Activated B cell treated with CpG ODN at 0.5 μM for 24 hours (primary cell): ENCODE measurements at regions of chr10 and their contacts with region 1.

Region 1: DNA sequence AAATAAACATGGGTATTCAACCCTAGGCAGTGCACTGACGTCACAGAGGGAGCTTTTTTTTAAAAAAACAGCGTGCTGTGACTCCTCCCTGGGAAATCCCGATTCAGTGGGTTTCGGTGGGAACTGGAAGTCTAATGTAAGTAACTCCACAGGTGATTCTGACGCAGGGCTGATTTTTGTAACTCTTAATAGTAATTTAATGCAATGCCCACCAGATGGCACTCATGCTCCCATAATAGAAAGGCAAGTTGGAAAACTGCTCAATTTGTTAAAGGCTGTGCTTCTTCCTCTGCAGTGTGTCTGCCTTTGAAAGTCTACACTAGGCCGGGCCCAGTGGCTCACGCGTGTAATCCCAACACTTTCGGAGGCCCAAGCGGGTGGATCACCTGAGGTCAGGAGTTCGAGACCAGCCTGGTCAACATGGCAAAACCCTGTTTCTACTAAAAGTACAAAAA is 10.9 kb upstream of the RSU1 start:
- DNase-seq: peak; percentile 16
- ATAC-seq: peak; percentile 86
- H3K4me3 Mint-ChIP-seq: no peak overlapping the region
- H3K27ac Mint-ChIP-seq: no peak overlapping the region
- H3K4me1 Mint-ChIP-seq: peaks cover 6% of the 10 kb centered on the region
- H3K27me3 Mint-ChIP-seq: no peaks in the 10 kb centered on the region
- CTCF ChIP-seq: no peak

Region 2: DNA sequence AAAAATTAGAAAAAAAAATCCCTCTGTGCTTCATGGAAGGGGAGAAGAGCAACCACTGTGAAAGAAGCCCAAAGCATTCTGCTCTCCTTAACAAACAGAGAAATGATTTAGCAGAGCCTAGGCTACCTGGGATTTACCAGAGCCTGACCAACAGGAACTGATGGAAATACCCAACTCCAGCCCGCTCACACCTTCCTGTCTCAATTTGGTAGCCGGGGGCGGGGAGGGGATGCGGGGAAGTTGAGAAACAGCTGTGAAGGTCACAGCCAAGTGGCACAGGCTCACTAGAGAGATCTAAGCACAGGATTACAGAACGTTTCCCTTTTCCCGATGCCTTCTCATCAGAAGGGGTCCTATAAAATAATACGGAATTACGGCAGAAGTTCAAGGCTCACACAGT is 28.5 kb before region 1 on chr10:
- CTCF ChIA-PET with region 1: no interaction called
- POLR2A ChIA-PET with region 1: no interaction called
- intact Hi-C with region 1: no loop called
- DNase-seq: no peak
- ATAC-seq: peak; percentile 40
- H3K4me3 Mint-ChIP-seq: no peak overlapping the region
- H3K27ac Mint-ChIP-seq: no peak overlapping the region
- H3K4me1 Mint-ChIP-seq: peaks cover 16% of the 10 kb centered on the region
- H3K27me3 Mint-ChIP-seq: no peaks in the 10 kb centered on the region
- CTCF ChIP-seq: no peak

Region 3: DNA sequence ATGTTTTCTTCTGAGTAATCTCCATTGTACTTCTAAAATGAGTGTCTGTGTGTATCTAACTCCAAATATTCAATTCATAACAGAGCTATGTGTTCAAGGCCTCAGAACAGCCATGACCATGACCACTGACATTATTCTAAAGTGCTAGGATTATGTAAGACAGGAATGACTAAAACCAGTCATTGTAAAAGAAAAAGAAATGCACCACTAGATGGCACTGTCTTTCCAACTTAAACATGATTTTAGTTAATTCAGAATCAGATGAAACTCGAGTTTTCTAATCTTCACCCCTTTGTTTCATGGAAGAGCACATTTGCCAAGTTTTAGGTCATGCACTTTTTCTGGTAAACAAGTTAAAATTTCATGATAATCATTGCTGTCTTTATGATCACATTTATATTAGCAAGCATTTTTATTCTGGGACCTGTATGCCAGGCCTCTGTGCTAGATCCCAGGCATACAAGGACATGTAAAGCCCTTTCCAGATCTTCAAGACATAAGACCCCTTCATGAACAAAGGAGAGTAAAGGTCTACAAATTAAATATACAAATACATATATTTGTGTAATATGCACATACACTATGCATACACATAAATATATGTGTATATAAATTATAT is 15.2 kb after region 1 on chr10:
- CTCF ChIA-PET with region 1: interaction called, 5 read pairs
- POLR2A ChIA-PET with region 1: no interaction called
- intact Hi-C with region 1: loop called (anchors 1 kb)
- DNase-seq: no peak
- ATAC-seq: peak; percentile 37
- H3K4me3 Mint-ChIP-seq: no peak overlapping the region
- H3K27ac Mint-ChIP-seq: no peak overlapping the region
- H3K4me1 Mint-ChIP-seq: no peaks in the 10 kb centered on the region
- H3K27me3 Mint-ChIP-seq: no peaks in the 10 kb centered on the region
- CTCF ChIP-seq: peak; percentile 35

Region 4: GRCh38 chr10:17257466-17258321 is 429.6 kb after region 1 on chr10:
- CTCF ChIA-PET with region 1: interaction called, 9 read pairs
- POLR2A ChIA-PET with region 1: no interaction called
- intact Hi-C with region 1: loop called (anchors 1 kb)
- DNase-seq: no peak
- ATAC-seq: peak; percentile 74
- H3K4me3 Mint-ChIP-seq: no peak overlapping the region
- H3K27ac Mint-ChIP-seq: no peak overlapping the region
- H3K4me1 Mint-ChIP-seq: peaks cover 6% of the 10 kb centered on the region
- H3K27me3 Mint-ChIP-seq: peaks cover 5% of the 10 kb centered on the region
- CTCF ChIP-seq: peak; percentile 88

Region 5: DNA sequence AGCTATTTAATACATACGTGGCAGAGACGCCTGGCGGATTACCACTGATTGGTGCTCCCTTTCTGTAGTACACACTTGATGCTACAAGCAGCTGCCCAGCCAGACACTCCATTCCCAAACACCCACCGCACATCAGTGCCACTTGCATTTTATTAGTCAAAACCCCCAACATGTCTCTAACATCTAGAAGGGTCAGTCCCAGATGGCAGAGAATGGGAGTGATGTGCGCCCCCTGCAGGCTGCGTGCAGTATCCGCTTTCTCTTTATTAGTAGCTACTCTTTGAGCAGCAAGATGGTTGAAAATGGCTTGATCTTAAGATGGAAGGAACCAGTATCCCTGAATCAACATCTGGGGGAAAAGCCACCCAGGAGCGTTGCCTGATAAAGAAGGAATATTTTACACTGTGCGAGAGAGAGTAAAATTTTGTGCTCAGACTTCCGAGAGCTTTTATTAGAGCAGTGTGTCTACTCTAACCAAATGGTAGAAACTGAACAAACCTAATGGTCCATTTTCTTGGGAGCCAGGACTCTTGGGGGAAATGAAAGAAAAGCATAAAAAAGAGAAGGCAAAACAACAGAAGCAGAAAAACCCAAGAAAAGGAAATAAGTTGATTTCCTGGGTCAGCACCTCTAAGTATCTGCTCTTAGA is 547.9 kb after region 1 on chr10:
- CTCF ChIA-PET with region 1: no interaction called
- POLR2A ChIA-PET with region 1: no interaction called
- intact Hi-C with region 1: loop called (anchors 1 kb)
- DNase-seq: no peak
- ATAC-seq: no peak
- H3K4me3 Mint-ChIP-seq: no peak overlapping the region
- H3K27ac Mint-ChIP-seq: no peak overlapping the region
- H3K4me1 Mint-ChIP-seq: no peaks in the 10 kb centered on the region
- H3K27me3 Mint-ChIP-seq: peaks cover 5% of the 10 kb centered on the region
- CTCF ChIP-seq: no peak

Region 6: GRCh38 chr10:17430647-17431355 is 602.7 kb after region 1 on chr10:
- CTCF ChIA-PET with region 1: no interaction called
- POLR2A ChIA-PET with region 1: no interaction called
- intact Hi-C with region 1: loop called (anchors 1 kb)
- DNase-seq: no peak
- ATAC-seq: peak; percentile 49
- H3K4me3 Mint-ChIP-seq: no peak overlapping the region
- H3K27ac Mint-ChIP-seq: no peak overlapping the region
- H3K4me1 Mint-ChIP-seq: peaks cover 49% of the 10 kb centered on the region
- H3K27me3 Mint-ChIP-seq: peaks cover 23% of the 10 kb centered on the region
- CTCF ChIP-seq: peak; percentile 72

Region 7: DNA sequence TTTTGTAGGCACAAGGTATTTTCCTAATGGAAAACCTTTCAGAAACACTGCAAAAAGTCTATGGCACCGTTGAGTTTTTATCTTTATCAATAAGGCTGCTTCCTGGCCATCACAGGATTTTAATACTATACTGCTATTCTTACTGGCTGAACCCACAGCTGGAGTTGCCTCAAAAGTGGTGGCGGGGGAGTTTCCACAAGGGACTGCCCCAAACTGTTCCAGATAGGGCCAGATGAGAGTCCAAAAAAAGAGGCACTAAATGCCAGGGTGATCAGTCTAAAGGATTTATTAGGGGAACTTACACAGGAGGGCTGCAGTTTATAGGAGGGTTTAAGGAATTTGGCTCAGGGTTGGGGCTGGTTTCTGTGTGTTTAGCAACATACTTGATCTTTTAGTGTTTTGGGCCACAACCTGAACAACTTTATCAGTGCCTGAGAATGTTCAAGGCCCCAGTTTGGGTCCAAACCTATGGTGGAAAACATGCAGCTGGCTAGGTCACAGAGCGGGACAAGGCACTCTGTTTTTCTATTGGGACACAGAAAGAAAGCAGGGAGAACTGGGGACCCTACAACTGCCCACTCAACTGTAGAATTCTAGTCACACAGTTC is 857.2 kb after region 1 on chr10:
- CTCF ChIA-PET with region 1: no interaction called
- POLR2A ChIA-PET with region 1: no interaction called
- intact Hi-C with region 1: no loop called
- DNase-seq: no peak
- ATAC-seq: peak; percentile 79
- H3K4me3 Mint-ChIP-seq: peak overlapping the region; percentile 12
- H3K27ac Mint-ChIP-seq: peak overlapping the region; percentile 59
- H3K4me1 Mint-ChIP-seq: peaks cover 35% of the 10 kb centered on the region
- H3K27me3 Mint-ChIP-seq: no peaks in the 10 kb centered on the region
- CTCF ChIP-seq: no peak

Region 8: DNA sequence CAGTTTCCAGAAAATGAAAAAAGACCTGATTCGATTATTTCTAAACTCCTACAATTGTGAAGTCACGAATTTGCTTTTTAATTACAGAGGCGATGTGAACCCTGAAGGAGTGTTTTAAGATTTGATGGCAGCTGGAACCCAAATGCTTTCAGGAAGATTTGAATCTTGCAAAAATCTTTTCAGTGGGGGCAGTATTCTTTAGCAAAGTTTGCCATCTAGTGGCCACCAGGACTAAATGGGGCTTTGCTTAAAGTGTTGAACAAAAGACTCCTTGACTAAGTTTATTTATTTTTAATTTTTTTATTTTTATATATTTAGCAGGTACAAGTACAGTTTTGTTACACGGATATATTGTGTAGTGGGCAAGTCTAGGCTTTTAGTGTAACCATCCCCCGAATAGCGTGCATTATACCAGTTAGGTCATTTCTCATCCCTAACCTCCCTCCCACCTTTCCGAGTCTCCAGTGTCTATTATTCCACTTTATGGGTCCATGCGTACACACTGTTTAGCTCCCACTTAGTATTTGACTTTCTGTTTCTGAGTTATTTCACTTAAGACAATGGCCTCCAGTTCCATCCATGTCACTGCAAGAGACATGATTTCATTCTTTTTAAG is 1410.8 kb after region 1 on chr10:
- CTCF ChIA-PET with region 1: no interaction called
- POLR2A ChIA-PET with region 1: no interaction called
- intact Hi-C with region 1: loop called (anchors 5 kb)
- DNase-seq: no peak
- ATAC-seq: no peak
- H3K4me3 Mint-ChIP-seq: no peak overlapping the region
- H3K27ac Mint-ChIP-seq: no peak overlapping the region
- H3K4me1 Mint-ChIP-seq: no peaks in the 10 kb centered on the region
- H3K27me3 Mint-ChIP-seq: peaks cover 1% of the 10 kb centered on the region
- CTCF ChIP-seq: no peak